Kidney (tissue), 22 donors: ENCODE measurements at regions of chr6 and their contacts with region 1.

Region 1: GRCh38 chr6:8131256-8131897 is 29.0 kb upstream of the EEF1E1 start:
- DNase-seq: peak in 4 of 5 donors; percentile 67 to 91 (median 78)
- H3K4me3 ChIP-seq: no peak overlapping the region
- H3K27ac ChIP-seq: no peak overlapping the region
- H3K4me1 ChIP-seq: no peaks in the 10 kb centered on the region
- H3K27me3 ChIP-seq: no peaks in the 10 kb centered on the region
- CTCF ChIP-seq: peak; percentile 67

Region 2: DNA sequence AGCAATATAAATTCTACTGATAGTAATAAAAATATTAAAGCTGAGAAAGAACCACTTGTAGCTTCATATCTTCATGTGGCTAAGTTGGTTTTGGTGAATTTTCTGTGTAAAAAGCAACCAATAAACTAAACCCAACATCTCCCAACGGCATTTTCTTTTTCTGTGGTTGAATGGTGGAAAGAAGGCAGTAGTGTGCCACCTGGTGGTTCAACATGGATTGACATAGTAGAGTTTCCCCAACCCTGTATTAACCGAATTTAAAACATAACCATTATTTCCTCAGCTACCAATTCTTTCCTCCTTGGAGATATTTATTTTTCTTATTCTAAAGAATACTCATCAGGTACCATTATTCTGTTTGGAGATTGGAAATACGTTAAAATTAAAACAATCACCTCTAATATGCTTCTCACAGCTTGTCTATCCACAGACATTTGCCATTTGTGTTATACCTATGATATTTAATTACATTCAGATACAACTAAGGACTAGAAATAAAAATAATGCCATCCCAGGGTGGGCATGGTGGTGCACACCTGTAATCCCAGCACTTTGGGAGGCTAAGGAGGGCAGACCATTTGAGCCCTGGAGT is 88.1 kb after region 1 on chr6:
- intact Hi-C with region 1: loop called (anchors 5 kb)
- DNase-seq: peak in 3 of 5 donors; percentile 34 to 83 (median 78)
- H3K4me3 ChIP-seq: peak overlapping the region in 1 of 3 donors; percentile 19
- H3K27ac ChIP-seq: no peak overlapping the region
- H3K4me1 ChIP-seq: no peaks in the 10 kb centered on the region
- H3K27me3 ChIP-seq: no peaks in the 10 kb centered on the region
- CTCF ChIP-seq: peak; percentile 63

Region 3: DNA sequence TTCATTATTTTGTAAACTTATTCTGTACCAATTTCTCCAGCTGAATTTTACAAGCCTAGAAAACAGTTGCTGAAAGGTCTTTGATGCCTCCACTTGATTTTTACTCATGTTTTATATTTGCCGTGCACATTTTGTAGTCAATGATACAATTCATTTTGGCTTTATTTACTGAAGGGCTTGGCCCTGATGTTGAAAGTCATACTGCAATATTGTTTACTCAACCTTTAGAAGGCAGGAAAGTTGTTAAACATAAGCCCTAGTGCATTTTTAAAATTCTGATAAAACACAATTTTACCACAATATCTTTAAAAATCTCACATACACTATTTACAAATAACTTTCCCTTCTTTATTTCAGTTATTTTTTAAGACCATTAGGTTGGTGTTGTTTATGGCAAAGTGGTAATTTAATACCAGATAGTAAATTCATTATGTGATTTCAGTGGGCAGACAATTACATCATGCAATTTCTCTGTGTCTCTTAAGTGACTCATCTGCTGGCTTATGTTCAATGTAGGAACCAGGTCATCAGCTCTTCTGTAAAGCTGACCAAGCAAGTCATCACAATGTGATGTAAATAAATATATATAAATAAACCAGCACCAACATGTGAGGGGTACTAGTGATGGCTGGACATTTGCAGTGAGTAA is 425.1 kb after region 1 on chr6:
- intact Hi-C with region 1: no loop called
- DNase-seq: no peak
- H3K4me3 ChIP-seq: no peak overlapping the region
- H3K27ac ChIP-seq: no peak overlapping the region
- H3K4me1 ChIP-seq: no peaks in the 10 kb centered on the region
- H3K27me3 ChIP-seq: no peaks in the 10 kb centered on the region
- CTCF ChIP-seq: no peak